K562 (cell line): ENCODE measurements at regions of chrX and their contacts with region 1.

Region 1: DNA sequence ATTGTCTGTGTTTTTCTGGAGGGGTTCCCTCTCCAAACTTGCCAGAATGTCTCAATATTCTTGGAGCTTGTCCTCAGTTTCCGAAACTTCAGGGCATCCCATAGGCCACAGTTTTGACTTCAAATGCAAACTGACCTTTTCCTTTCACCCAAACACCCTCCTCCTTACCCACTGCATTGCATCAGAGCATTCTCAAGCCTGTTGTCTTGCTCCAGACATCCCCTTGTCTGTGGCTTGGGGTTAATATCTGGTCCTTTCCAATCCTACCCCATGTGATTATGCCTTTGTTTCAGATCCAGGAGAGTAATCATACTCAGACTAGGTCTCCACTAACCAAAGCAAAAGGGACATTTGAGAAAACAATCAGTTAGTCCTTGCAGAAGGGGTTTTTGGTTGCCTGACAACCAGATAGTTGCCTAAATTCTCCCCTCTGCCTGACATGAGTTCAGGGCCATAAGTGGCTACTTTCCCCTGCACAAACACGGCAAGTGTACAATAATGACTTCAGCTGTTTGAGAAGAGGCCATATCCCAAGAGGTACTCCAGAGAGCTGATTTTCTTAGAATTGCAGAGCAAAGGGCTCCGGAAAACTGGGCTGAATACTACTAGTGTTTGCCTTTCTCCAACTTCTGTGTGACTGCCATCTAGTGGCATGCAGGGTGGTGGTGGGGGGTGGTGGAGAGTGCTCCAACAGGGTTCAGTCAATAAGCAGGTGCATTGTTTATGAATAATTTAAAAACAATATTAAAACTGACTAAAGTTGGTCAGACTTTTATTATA is 130.2 kb downstream of the CHRDL1 start:
- DNase-seq: peak; percentile 8 to 33 (median 18)
- ATAC-seq: peak; percentile 91
- H3K4me3 ChIP-seq: no peak overlapping the region
- H3K27ac ChIP-seq: no peak overlapping the region
- H3K4me1 ChIP-seq: no peaks in the 10 kb centered on the region
- H3K27me3 ChIP-seq: no peaks in the 10 kb centered on the region
- CTCF ChIP-seq: peak; percentile 51 to 53 (median 52)
- EP300 ChIP-seq: no peak
- POLR2A ChIP-seq: no peak
- RAD21 ChIP-seq: peak in 1 of 2 experiments; percentile 31; a peak in 2 of 4 replicates

Region 2: DNA sequence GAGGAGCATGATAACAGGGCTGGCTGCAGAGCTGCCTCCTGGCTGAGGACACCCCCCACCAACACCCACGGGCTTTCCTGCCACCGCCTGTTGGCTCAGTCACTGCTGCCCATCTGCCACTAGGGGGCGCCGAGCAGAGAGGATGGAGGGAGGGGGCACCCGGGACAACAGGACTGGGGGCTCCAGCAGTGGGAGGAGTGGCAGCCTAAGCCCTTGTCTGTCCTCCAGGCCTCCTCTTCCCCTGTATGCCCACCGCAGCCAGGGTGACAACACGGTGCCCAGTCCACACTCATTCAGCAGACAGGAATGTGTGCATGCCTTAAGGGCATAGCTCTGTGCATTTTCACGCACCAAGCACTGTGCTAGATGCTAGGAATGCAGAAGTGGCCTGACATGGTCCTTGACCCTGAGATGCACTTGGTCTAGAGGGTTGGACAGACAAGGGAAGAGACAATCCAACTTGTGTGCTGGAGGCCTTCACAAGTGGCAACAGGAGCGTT is 497.4 kb before region 1 on chrX:
- CTCF ChIA-PET with region 1: no interaction called
- POLR2A ChIA-PET with region 1: no interaction called
- in situ Hi-C with region 1: loop called (anchors 25 kb)
- intact Hi-C with region 1: no loop called
- DNase-seq: peak; percentile 74 to 77 (median 75)
- ATAC-seq: peak; percentile 94
- H3K4me3 ChIP-seq: no peak overlapping the region
- H3K27ac ChIP-seq: no peak overlapping the region; the same call in 2 of the 3 replicates
- H3K4me1 ChIP-seq: peaks cover 7 to 16% of the 10 kb centered on the region in 2 experiments; a peak in 4 of 5 replicates
- H3K27me3 ChIP-seq: no peaks in the 10 kb centered on the region
- CTCF ChIP-seq: peak; percentile 62 to 84 (median 69)
- EP300 ChIP-seq: no peak
- POLR2A ChIP-seq: no peak
- RAD21 ChIP-seq: peak; percentile 36 to 63

Region 3: DNA sequence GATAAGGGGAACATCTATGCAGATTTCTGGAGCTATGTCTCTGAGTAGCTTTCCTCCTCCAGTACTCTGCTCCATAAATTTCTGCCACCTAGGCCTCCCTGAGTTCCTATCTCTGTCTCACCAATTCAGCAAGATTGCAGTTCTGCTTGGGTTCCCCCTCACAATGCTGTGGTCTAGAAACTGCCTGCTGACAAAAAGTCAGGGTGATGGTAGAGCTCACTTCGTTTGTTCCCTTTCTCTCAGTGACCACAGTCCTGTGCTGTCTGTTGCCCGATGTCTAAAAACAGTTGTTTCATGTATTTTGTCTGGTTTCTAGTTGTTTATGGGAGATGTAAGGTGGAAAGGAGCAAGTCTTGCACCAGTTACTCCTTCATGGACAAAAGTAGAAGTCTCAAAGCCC is 388.6 kb before region 1 on chrX:
- CTCF ChIA-PET with region 1: no interaction called
- POLR2A ChIA-PET with region 1: no interaction called
- in situ Hi-C with region 1: no loop called
- intact Hi-C with region 1: no loop called
- DNase-seq: no peak
- ATAC-seq: no peak
- H3K4me3 ChIP-seq: no peak overlapping the region
- H3K27ac ChIP-seq: no peak overlapping the region
- H3K4me1 ChIP-seq: peaks cover 0 to 11% of the 10 kb centered on the region in 2 experiments; a peak in 2 of 5 replicates
- H3K27me3 ChIP-seq: no peaks in the 10 kb centered on the region
- CTCF ChIP-seq: no peak
- EP300 ChIP-seq: no peak
- POLR2A ChIP-seq: no peak
- RAD21 ChIP-seq: no peak

Region 4: DNA sequence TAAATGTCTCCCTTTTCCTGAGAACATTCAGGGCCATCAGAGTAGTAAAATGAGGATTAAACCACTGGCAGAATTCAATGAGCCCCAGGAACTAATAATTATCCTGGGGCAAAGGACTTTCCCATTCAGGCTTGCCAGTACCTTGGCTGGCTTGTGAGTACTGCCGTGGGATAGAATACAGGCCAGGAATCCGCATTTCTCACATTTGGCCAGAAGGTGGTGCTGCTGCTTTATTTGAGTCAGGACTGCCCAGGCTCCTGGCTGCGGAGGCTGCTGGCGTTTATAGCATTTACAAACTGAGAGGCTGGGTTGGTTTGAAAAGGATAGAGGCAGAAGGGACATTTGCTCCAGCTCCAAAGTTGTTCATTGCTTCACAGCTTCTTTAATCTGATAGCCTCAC is 215.4 kb before region 1 on chrX:
- CTCF ChIA-PET with region 1: no interaction called
- POLR2A ChIA-PET with region 1: no interaction called
- in situ Hi-C with region 1: loop called (anchors 25 kb)
- intact Hi-C with region 1: loop called (anchors 5 kb)
- DNase-seq: peak; percentile 64 to 74 (median 71)
- ATAC-seq: peak; percentile 99
- H3K4me3 ChIP-seq: no peak overlapping the region
- H3K27ac ChIP-seq: no peak overlapping the region
- H3K4me1 ChIP-seq: no peaks in the 10 kb centered on the region
- H3K27me3 ChIP-seq: peaks cover 5 to 24% of the 10 kb centered on the region in 2 experiments; a peak in 3 of 5 replicates
- CTCF ChIP-seq: peak; percentile 75 to 78 (median 77)
- EP300 ChIP-seq: no peak
- POLR2A ChIP-seq: no peak
- RAD21 ChIP-seq: peak; percentile 56 to 78

Region 5: DNA sequence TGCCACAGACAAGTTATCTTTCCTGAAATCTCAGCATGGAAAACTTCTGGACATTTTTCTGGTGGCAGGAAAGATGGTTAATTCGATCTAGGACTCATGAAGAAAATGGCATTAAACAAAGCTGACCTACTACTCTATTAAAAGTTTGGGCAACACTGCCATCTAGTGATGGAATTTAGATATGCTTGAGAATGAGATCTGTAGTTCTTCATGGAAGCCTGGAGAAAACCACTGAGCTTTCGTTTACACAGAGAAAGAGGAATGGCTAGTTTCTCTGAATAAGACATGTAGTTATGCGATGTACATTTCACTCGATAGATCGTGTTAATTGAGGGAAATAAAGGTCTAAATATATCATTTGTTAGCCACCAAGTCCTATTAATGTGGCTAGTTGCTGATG is 181.9 kb after region 1 on chrX:
- CTCF ChIA-PET with region 1: no interaction called
- POLR2A ChIA-PET with region 1: no interaction called
- in situ Hi-C with region 1: no loop called
- intact Hi-C with region 1: loop called (anchors 10 kb)
- DNase-seq: peak; percentile 36 to 67 (median 47)
- ATAC-seq: peak; percentile 91
- H3K4me3 ChIP-seq: no peak overlapping the region
- H3K27ac ChIP-seq: no peak overlapping the region
- H3K4me1 ChIP-seq: no peaks in the 10 kb centered on the region; a peak in 1 of 5 replicates
- H3K27me3 ChIP-seq: no peaks in the 10 kb centered on the region
- CTCF ChIP-seq: peak; percentile 29 to 63 (median 46); a peak in 4 of 6 replicates
- EP300 ChIP-seq: no peak
- POLR2A ChIP-seq: no peak
- RAD21 ChIP-seq: peak; percentile 44 to 64